ENCODE measurements at regions of chr6 and their contacts with region 1.

Region 1: DNA sequence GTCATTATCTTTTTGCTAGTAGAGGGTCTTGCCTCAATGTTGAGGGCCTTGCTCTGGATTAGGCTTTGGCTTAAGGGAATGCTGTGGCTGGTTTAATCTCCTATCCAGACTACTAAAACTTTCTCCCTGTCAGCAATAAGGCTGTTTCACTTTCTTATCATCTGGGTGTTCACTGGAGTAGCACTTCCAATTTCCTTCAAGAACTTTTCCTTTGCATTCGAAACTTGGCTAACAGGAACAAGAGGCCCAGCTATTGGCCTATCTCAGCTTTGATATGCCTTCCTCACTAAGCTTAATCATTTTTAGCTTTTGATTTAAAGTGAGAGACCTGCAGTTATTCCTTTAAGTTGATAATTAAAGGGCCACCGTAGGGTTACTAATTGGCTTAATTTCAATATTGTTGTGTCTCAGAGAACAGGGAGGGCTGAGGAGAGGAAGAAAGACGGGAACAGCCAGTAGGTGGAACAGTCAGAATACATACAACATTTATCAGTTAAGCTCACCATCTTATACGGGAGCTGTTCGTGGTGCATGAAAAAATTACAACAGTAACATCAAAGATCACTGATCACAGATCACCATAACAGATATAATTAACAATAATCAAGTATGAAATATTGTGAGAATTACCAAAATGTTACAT is 186.7 kb downstream of the PTPRK start:
- DNase-seq: peak; percentile 13
- H3K4me3 ChIP-seq: no peak overlapping the region
- H3K27ac ChIP-seq: no peak overlapping the region
- H3K4me1 ChIP-seq: peaks cover 71% of the 10 kb centered on the region
- H3K27me3 ChIP-seq: no peaks in the 10 kb centered on the region
- CTCF ChIP-seq: no peak

Region 2: DNA sequence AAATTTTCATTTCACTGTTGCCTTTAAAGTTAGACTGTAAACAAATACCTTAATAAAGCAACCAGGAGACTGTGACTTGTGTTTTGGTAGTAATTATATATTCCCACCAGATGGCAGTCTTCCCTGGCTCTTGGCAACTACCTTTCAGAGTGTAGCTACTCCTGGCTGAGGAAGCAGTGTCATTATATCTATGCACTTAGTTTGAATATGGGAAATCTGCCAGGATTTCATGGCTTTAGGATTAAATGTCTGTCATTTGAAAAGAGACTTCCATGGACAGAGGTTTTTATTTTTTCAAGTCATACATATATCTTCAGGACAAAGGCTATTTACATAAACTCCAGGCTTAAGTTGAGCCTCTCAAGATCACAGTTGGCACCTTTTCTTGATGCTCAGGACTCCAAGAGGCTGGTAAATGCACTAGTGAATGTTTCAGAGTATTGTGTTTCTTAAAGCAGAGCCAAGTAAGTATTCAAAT is 596.7 kb before region 1 on chr6:
- CTCF ChIA-PET with region 1: no interaction called
- POLR2A ChIA-PET with region 1: no interaction called
- intact Hi-C with region 1: loop called (anchors 5 kb)
- DNase-seq: peak; percentile 93
- H3K4me3 ChIP-seq: no peak overlapping the region
- H3K27ac ChIP-seq: no peak overlapping the region
- H3K4me1 ChIP-seq: peaks cover 7% of the 10 kb centered on the region
- H3K27me3 ChIP-seq: no peaks in the 10 kb centered on the region
- CTCF ChIP-seq: peak; percentile 72

Region 3: DNA sequence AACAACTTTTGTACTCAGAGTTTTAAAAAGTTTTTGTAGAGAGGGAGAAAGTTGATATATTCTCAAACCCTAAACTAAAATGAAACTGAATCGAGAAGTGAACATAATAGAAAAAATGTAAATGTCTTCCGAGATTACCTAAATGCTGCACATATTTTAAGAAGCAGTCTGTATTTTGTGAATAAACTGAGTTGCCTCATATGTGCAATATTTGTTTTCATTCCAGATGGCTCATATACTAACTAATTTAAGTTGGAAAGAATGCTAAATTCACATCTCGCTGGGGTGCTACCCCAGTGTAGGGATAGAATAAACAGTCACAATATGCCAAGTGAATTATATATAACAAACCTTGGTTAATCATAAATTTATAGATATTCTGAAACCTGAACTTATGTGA is 147.0 kb before region 1 on chr6:
- CTCF ChIA-PET with region 1: no interaction called
- POLR2A ChIA-PET with region 1: no interaction called
- intact Hi-C with region 1: no loop called
- DNase-seq: no peak
- H3K4me3 ChIP-seq: no peak overlapping the region
- H3K27ac ChIP-seq: no peak overlapping the region
- H3K4me1 ChIP-seq: no peaks in the 10 kb centered on the region
- H3K27me3 ChIP-seq: no peaks in the 10 kb centered on the region
- CTCF ChIP-seq: no peak

Region 4: DNA sequence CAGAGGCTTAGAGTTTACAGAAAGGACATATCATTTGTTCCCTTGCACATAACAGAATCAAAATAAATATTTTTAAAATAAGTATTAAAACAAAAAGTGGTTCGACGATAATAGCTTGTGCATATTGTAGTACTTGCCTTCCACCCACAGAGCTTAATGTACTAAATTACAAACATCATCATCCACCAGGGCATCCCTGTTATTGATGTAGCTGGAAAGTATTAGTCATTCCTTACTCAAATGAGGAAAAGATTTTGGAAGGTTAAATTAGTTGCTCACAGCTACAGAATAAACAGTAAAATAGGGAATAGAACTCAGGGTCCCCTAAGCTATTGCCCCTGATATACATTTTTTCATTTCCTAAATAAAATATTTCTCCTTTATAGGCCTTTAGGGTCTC is 36.4 kb after region 1 on chr6:
- CTCF ChIA-PET with region 1: no interaction called
- POLR2A ChIA-PET with region 1: no interaction called
- intact Hi-C with region 1: no loop called
- DNase-seq: peak; percentile 10
- H3K4me3 ChIP-seq: no peak overlapping the region
- H3K27ac ChIP-seq: no peak overlapping the region
- H3K4me1 ChIP-seq: peaks cover 5% of the 10 kb centered on the region
- H3K27me3 ChIP-seq: no peaks in the 10 kb centered on the region
- CTCF ChIP-seq: no peak

Region 5: GRCh38 chr6:128438393-128438792 is 104.7 kb after region 1 on chr6:
- CTCF ChIA-PET with region 1: no interaction called
- POLR2A ChIA-PET with region 1: no interaction called
- intact Hi-C with region 1: loop called (anchors 2 kb)
- DNase-seq: peak; percentile 88
- H3K4me3 ChIP-seq: peak overlapping the region; percentile 27
- H3K27ac ChIP-seq: peak overlapping the region; percentile 68
- H3K4me1 ChIP-seq: peaks cover 55% of the 10 kb centered on the region
- H3K27me3 ChIP-seq: no peaks in the 10 kb centered on the region
- CTCF ChIP-seq: no peak

Region 6: GRCh38 chr6:128569737-128570679 is 236.3 kb after region 1 on chr6:
- CTCF ChIA-PET with region 1: no interaction called
- POLR2A ChIA-PET with region 1: no interaction called
- intact Hi-C with region 1: no loop called
- DNase-seq: peak; percentile 44
- H3K4me3 ChIP-seq: no peak overlapping the region
- H3K27ac ChIP-seq: no peak overlapping the region
- H3K4me1 ChIP-seq: peaks cover 4% of the 10 kb centered on the region
- H3K27me3 ChIP-seq: no peaks in the 10 kb centered on the region
- CTCF ChIP-seq: no peak